ENCODE measurements at regions of chr2 and their contacts with region 1.

Region 1: DNA sequence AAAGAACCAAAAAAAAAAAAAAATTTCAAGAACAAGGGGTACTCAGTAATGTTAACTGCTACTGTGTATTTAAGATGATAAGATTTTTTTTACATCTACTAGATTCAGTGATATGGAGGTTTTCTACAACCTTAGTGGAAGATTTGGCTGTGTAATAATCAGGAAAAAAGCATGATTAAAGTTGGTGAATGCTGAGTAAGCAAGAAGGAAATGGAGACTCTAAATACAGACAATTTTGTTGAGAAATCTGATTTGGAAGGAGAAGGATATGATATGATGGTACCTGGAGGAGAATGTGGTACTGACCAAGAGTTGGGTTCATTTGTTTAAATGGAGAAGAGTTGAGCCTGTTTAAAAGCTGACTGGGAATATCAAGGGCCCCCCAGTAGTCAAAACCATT is 125.1 kb downstream of the WDPCP start:
- DNase-seq: no peak
- ATAC-seq: no peak

Region 2: DNA sequence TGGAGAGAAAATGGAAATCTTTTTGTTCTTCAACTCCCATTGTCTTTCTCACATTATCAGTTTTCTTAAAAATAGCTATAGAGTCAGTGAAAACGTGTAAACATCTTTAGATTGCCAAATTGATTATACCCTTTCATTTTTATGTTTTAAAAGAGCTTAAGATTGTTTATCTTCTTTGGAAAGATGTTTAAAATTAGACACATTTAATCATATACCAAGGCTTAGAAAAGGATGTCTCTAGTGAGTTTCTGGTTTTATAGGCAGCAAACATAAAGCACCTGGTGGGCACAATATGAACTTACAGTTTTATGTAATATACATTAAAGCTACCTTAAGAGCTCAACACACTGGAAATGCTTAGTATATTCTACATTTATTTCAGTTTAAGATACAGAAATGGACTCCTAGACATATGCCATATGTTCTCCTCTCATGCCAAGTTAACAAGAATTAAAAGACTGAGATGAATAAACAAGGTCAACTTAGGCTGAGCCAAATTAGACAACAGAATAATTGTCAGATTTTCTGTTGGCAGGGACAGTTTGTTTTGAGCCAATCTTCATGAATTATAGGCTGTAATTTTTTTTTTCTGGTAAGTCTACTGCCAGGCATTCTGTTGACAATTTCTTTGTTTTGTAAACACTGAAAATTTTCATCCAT is 299.9 kb before region 1 on chr2:
- intact Hi-C with region 1: no loop called
- DNase-seq: no peak
- ATAC-seq: no peak

Region 3: DNA sequence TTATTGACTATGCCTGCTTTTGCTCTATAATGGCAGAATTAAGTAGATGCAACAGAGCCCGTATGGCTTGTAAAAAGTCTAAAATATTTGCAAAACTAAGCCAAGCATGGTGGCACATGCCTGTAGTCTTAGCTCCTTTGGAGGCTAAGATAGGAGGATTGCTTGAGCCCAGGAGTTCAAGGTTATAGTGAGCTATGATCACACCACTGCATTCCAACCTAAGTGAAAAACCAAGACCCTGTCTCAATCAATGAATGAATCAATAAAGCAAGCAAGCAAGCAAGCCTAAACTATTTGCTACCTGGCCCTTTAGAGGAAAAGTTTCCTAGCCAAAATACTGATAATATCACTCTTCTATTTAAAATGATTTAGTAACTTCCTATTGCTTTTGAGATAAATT is 152.5 kb before region 1 on chr2:
- intact Hi-C with region 1: loop called (anchors 5 kb)
- DNase-seq: no peak
- ATAC-seq: no peak

Measured in sciatic nerve (tissue), 2 donors.